ENCODE measurements at regions of chr6 and their contacts with region 1.

Region 1: DNA sequence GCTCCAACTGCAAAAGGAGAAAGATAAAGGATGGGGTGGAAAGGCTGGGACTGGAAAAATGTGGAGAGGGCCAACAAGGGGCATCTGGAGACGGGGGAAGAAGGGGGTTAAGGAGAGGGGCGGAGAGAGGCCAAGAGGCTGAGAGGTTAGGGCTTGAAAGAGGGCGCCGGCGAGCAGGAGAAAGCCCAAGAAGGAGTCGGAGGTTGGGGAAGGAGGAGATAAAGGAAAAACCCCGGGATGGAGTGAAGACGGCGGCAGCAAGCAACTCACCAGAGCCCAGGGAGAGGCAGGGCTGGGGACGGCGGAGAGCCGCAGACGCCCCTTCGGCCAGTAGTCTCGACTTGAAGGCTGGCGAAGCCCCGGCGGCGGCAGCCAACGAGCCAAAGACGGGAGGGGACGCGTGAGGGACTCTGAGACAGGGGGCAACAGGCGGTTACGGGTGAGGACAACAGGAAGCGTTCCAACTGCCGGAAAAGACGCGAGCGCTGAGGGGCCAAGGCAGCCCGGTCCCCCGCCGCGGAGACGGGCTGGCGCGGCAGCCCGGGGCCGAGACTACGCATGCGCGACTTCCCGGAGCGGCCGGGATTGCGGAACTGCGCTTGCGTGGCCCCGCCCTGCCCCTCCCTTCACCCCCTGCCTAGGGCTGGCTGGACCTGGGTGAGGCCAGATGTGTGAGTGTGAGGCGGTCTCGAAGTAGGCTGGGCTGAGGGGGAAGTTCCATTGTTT is at the start of gene STK38:
- DNase-seq: peak; percentile 89
- ATAC-seq: peak; percentile 91
- H3K4me3 ChIP-seq: peak within 1 kb of the TSS; percentile 94
- H3K27ac ChIP-seq: peak within 1 kb of the TSS; percentile 55
- H3K4me1 ChIP-seq: peaks cover 34% of the 10 kb centered on the region
- H3K27me3 ChIP-seq: no peaks in the 10 kb centered on the region
- CTCF ChIP-seq: peak; percentile 52
- total RNA-seq, gene STK38: 25.7 and 26.9 TPM in 2 replicates

Region 2: GRCh38 chr6:36432151-36432633 is 114.9 kb before region 1 on chr6:
- CTCF ChIA-PET with region 1: no interaction called
- POLR2A ChIA-PET with region 1: no interaction called
- intact Hi-C with region 1: no loop called
- DNase-seq: peak; percentile 53
- ATAC-seq: 0 out of 2 replicates have a peak, but pooled peaks have one; percentile 31
- H3K4me3 ChIP-seq: no peak overlapping the region
- H3K27ac ChIP-seq: no peak overlapping the region
- H3K4me1 ChIP-seq: peaks cover 11% of the 10 kb centered on the region
- H3K27me3 ChIP-seq: no peaks in the 10 kb centered on the region
- CTCF ChIP-seq: no peak

Region 3: DNA sequence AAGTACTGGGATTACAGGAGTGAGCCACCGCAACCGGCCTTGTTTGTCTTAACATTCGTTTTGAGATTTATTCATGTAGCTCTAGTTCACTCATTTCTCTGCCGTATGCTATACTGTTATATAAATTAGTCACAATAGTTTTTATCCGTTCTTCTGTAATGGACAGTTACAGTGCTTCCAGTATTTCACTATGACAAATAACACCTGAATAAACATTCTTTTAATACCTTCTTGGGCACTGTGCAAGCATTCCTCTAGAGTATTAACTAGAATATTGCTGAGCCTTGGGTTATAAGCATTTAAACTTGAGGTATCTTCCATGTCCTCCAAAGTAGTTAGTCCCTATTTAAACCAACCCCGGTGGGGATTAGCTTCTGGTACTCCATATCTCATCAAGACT is 45.4 kb before region 1 on chr6:
- CTCF ChIA-PET with region 1: no interaction called
- POLR2A ChIA-PET with region 1: interaction called, 21 read pairs
- intact Hi-C with region 1: no loop called
- DNase-seq: peak; percentile 63
- ATAC-seq: peak; percentile 94
- H3K4me3 ChIP-seq: no peak overlapping the region
- H3K27ac ChIP-seq: peak overlapping the region; percentile 19; the same call in 1 of the 2 replicates
- H3K4me1 ChIP-seq: peaks cover 13% of the 10 kb centered on the region; the same call in 1 of the 2 replicates
- H3K27me3 ChIP-seq: no peaks in the 10 kb centered on the region
- CTCF ChIP-seq: no peak

Region 4: DNA sequence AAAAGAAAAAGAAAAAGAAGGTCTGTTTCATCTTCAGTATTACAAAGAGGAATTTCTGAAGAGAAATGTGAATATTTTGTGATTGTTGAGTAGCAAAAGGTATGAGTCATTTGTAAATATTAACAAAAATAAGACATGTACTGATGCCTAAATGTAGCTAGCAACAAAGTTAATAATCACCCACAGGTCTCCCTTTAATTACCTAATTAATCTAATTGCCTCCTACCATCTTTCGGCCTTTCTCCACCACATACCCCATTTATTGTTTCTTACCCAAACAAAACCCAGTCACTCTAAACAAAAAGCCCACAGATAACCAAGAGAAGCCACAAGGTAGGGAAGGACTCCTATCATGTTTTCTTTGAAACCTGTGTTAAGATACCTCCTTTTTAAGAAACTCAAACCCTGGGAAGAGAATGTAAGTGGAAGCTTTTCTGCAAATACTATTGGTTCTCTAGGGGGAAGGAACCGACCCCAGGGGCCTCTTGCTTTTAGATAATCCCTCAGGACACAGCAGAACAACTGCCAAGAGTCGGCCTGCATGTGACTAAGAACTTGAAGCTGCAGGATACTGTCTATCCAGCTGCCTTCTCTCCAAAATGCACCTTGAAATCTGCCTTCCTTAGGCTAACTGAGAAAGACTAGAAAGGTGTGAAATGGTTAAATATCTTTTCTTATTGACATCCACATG is 16.3 kb after region 1 on chr6:
- CTCF ChIA-PET with region 1: no interaction called
- POLR2A ChIA-PET with region 1: no interaction called
- intact Hi-C with region 1: no loop called
- DNase-seq: no peak
- ATAC-seq: peak; percentile 40
- H3K4me3 ChIP-seq: no peak overlapping the region
- H3K27ac ChIP-seq: no peak overlapping the region
- H3K4me1 ChIP-seq: peaks cover under 1% of the 10 kb centered on the region; the same call in 1 of the 2 replicates
- H3K27me3 ChIP-seq: no peaks in the 10 kb centered on the region
- CTCF ChIP-seq: no peak

Region 5: DNA sequence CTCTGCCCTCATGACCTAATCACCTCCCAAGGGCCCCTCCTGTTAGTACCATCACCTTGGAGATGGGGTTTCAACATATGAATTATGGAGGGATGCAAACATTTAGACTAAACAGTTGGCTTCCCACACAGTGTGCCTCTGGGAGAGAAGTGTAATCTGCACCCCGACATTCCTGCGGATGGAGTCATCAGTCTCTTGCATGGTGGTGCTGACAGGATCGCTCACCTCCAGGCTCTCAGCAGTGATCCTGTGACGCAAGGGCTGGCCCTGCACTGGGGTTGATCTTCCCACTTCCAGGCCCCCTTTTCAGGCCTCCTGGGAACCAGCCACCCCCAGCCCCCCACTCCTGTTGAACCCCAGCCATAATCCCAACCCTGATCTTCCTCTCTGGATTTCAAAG is 391.5 kb after region 1 on chr6:
- CTCF ChIA-PET with region 1: no interaction called
- POLR2A ChIA-PET with region 1: no interaction called
- intact Hi-C with region 1: no loop called
- DNase-seq: no peak
- ATAC-seq: no peak
- H3K4me3 ChIP-seq: no peak overlapping the region
- H3K27ac ChIP-seq: no peak overlapping the region
- H3K4me1 ChIP-seq: 0 out of 2 replicates have a peak, but pooled peaks cover 5% of the 10 kb centered on the region
- H3K27me3 ChIP-seq: no peaks in the 10 kb centered on the region
- CTCF ChIP-seq: no peak

Measured in PC-3 (cell line).